Activated CD4-positive, alpha-beta T cell treated with anti-CD3 and anti-CD28 coated beads for 36 hours (primary cell): ENCODE measurements at regions of chr16 and their contacts with region 1.

Region 1: DNA sequence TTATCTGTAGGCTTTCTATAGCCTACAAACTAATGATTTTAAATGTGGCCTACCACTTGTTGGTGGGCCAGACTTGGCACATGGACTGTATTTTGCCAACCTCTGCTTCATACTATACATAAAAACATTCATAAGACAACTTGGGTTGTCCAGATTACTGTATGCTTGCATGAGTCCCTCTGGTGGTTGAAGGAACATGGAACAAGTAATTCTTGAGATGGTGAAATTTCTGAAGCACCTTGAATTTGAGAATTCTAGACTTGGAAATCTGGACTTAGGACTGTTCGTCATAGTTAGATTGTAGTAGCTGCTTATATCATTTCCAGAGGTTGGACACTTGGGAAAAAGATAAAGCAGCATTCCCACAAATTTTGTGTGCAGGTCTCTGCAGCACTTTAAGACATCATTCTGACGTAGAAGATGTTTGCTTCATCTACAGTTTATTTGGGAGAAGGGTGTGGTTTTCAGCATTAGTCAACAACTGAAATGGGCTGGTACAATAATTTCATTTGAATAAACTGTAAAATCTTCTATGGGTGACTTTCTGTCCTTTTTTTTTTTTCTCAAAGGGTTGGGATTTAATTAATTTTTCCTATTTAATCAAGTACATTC is 31.2 kb downstream of the NFATC3 start:
- DNase-seq: no peak
- ATAC-seq: peak; percentile 48
- H3K4me3 Mint-ChIP-seq: no peak overlapping the region
- H3K27ac Mint-ChIP-seq: no peak overlapping the region
- H3K4me1 Mint-ChIP-seq: peaks cover 87% of the 10 kb centered on the region
- H3K27me3 Mint-ChIP-seq: no peaks in the 10 kb centered on the region

Region 2: DNA sequence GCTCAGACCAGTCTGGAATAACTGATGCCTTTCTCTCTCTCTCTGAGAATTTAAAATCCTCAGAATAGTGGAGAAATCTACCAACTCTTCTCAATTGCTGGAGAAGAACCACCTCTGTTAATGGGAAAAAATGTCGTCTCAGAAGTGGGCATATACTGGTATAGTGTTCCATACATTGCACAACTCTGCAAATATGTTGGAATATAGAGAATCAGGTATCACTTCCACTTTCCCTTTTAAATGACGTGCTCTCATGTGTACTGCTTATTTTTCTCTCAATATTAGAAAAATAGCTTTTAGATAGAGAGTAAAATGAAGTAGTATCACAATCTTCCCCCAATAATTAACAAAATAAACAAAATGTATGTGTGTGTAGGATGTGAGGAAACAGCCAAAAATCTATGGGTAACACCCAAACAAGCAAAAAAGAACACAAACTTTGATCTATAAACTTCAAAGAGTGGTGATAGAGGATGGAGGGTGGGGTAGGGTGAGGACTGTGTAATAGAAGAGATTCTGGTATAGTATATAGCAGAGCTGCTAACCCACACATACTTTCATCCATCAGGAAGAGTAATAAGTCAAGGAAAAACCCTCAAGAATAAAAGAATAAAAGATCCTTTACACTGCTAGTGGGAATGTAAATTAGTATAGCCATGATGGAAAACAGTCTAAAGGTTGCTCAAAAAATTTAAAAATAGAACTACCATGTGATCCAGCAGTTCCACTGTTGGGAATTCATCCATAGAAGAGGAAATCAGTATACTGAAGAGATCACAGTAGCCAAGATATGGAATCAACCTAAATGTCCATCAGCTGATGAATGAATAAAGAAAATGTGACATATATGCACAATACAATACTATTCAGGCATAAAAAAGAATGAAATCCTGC is 15.7 kb after region 1 on chr16:
- CTCF ChIA-PET with region 1: interaction called, 10 read pairs
- POLR2A ChIA-PET with region 1: interaction called, 4 read pairs
- intact Hi-C with region 1: no loop called
- DNase-seq: no peak
- ATAC-seq: peak; percentile 47
- H3K4me3 Mint-ChIP-seq: peak overlapping the region; percentile 1
- H3K27ac Mint-ChIP-seq: peak overlapping the region; percentile 66
- H3K4me1 Mint-ChIP-seq: peaks cover 49% of the 10 kb centered on the region
- H3K27me3 Mint-ChIP-seq: no peaks in the 10 kb centered on the region

Region 3: GRCh38 chr16:68206245-68206644 is 89.9 kb after region 1 on chr16:
- CTCF ChIA-PET with region 1: no interaction called
- POLR2A ChIA-PET with region 1: no interaction called
- intact Hi-C with region 1: loop called in 1 of 2 experiments (anchors 5 kb)
- DNase-seq: no peak
- ATAC-seq: no peak
- H3K4me3 Mint-ChIP-seq: no peak overlapping the region
- H3K27ac Mint-ChIP-seq: no peak overlapping the region
- H3K4me1 Mint-ChIP-seq: peaks cover 24% of the 10 kb centered on the region
- H3K27me3 Mint-ChIP-seq: no peaks in the 10 kb centered on the region

Region 4: DNA sequence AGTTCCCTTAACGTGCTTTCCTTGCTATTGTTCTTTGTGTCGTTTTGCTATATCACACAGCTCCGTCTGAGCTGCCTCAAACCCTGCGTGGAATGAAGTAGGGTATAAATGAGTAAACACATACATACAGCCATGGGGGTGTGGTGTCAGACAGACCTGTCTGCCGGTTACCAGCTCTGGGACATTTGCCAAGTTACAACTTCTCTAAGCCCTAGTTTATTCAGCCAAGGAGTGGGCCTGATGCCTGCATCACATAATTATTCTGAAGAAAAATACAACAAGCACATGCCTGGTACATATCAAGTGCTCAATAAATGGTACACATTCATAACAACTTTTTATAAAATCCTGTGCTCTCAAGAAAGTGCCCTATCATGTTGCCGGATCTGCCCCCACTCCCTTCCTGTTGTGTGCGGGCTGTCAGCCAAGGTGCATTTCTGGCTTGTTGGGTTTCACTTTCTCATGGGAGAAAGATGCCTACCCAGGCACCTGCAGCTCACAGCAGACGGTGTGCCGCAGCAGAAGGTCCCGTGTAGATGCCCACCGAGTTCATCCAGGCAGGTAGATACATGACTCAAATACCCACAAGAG is 301.4 kb after region 1 on chr16:
- CTCF ChIA-PET with region 1: no interaction called
- POLR2A ChIA-PET with region 1: no interaction called
- intact Hi-C with region 1: no loop called
- DNase-seq: peak; percentile 85
- ATAC-seq: peak; percentile 91
- H3K4me3 Mint-ChIP-seq: peak overlapping the region; percentile 67
- H3K27ac Mint-ChIP-seq: peak overlapping the region; percentile 88
- H3K4me1 Mint-ChIP-seq: peaks cover 59% of the 10 kb centered on the region
- H3K27me3 Mint-ChIP-seq: no peaks in the 10 kb centered on the region

Region 5: GRCh38 chr16:68429076-68429854 is 312.9 kb after region 1 on chr16:
- CTCF ChIA-PET with region 1: no interaction called
- POLR2A ChIA-PET with region 1: no interaction called
- intact Hi-C with region 1: no loop called
- DNase-seq: no peak
- ATAC-seq: no peak
- H3K4me3 Mint-ChIP-seq: no peak overlapping the region
- H3K27ac Mint-ChIP-seq: no peak overlapping the region
- H3K4me1 Mint-ChIP-seq: peaks cover 18% of the 10 kb centered on the region
- H3K27me3 Mint-ChIP-seq: no peaks in the 10 kb centered on the region